Mammary epithelial cell (primary cell): ENCODE measurements at regions of chr14 and their contacts with region 1.

Region 1: DNA sequence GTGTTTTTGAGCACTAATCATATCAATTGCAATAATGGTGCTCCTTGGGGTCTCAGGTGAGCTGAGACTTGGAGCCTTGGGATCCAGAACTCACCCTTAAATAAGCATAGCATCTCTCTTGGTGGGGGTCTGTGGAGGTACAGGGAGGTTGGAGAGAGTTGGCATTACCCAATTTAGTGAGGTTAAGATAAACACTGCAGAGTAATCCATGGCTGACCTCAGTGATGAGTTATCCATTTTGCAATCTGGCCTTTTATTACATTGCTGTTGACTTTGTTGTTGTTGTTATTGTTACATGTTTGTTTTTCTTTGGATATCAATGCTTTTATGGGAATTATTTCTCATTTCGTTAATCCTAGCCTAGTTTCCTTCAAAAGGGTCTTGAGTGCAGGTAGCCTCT is 373.3 kb downstream of the NRXN3 start:
- DNase-seq: no peak
- H3K4me3 ChIP-seq: no peak overlapping the region
- H3K27ac ChIP-seq: no peak overlapping the region
- H3K4me1 ChIP-seq: no peaks in the 10 kb centered on the region
- H3K27me3 ChIP-seq: no peaks in the 10 kb centered on the region
- CTCF ChIP-seq: no peak

Region 2: GRCh38 chr14:78566026-78566858 is 22.8 kb after region 1 on chr14:
- CTCF ChIA-PET with region 1: interaction called, 12 read pairs
- dilution Hi-C with region 1: no loop called
- in situ Hi-C with region 1: no loop called
- intact Hi-C with region 1: no loop called
- DNase-seq: peak; percentile 49
- H3K4me3 ChIP-seq: no peak overlapping the region
- H3K27ac ChIP-seq: no peak overlapping the region
- H3K4me1 ChIP-seq: no peaks in the 10 kb centered on the region
- H3K27me3 ChIP-seq: no peaks in the 10 kb centered on the region
- CTCF ChIP-seq: peak; percentile 43 to 75